Calu3 (cell line): ENCODE measurements at regions of chr18 and their contacts with region 1.

Region 1: GRCh38 chr18:3151399-3152264 is 68.1 kb downstream of the MYOM1 start:
- DNase-seq: no peak
- H3K4me3 Mint-ChIP-seq: no peak overlapping the region
- H3K27ac Mint-ChIP-seq: peak overlapping the region; percentile 52
- H3K4me1 Mint-ChIP-seq: peaks cover 46% of the 10 kb centered on the region
- H3K27me3 Mint-ChIP-seq: no peaks in the 10 kb centered on the region
- CTCF ChIP-seq: peak; percentile 51

Region 2: DNA sequence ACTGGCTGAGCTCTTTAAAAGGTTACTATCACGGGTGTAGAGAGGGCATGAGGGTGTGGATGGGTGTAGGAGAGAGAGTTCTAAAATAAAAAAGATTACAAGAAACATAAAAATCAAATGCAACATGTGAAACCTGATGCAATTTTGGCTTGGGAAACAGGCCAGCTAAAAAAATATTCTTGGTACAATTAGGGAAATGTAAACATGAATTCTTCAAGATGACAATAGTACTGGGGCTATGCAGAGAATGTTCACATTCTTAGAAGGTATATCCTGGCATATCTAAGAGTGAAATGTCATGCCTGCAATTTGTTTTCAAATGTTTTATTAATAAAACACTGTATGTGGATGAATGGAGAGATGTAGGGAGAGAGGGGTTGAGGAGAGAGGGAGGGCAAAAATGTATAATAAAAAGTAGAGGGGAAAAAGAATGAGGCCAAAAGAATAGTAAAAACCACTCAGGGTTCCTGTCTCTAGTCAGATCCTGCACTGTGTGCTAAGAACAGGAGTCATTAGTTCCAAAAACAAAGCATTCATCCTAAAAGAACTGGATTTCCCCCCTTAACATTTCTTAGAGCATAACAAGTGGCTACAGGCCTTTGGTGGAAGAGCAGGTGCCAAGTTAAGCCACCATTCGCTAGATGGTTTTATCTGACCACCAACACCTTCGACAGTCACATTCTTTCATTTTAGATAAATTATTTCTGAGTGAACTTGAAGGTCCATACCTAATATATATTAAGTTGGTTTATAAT is 216.0 kb before region 1 on chr18:
- CTCF ChIA-PET with region 1: no interaction called
- intact Hi-C with region 1: loop called (anchors 5 kb)
- DNase-seq: no peak
- H3K4me3 Mint-ChIP-seq: no peak overlapping the region
- H3K27ac Mint-ChIP-seq: no peak overlapping the region
- H3K4me1 Mint-ChIP-seq: peaks cover 17% of the 10 kb centered on the region
- H3K27me3 Mint-ChIP-seq: no peaks in the 10 kb centered on the region
- CTCF ChIP-seq: no peak

Region 3: DNA sequence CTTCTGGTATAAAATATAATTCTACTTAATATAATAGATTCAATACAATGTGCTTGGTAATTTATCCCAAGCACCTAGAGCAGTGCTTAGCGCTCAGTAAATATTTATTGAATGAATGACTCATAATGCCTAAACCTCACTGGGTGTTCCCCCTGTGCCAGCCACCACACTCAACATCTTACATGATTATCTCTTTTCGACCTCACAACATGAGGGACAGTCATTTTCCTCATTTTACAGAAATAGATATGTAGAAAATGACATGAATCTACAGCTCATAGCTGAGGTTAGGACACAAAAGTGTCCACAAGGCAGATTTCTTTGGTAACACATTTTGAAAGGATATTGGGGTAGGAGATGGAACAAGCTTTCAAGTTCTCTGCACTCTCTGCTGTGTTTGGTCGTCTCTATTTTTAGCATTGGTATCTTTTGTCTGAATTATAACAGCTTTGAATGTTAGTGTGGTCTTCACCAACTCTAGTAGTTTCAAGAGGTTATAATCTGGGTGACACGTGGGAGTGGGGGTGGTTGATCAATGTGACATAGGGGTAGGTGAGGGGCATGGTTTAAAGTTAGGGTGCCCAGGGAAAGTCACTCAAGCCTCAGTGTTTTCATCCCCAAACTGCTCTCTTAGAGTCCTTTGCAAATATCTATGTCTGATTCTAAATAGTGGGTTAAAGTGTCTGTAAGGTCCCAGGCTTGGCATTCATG is 58.4 kb after region 1 on chr18:
- CTCF ChIA-PET with region 1: interaction called, 3 read pairs
- intact Hi-C with region 1: loop called (anchors 5 kb)
- DNase-seq: no peak
- H3K4me3 Mint-ChIP-seq: peak overlapping the region; percentile 23
- H3K27ac Mint-ChIP-seq: peak overlapping the region; percentile 83
- H3K4me1 Mint-ChIP-seq: peaks cover 44% of the 10 kb centered on the region
- H3K27me3 Mint-ChIP-seq: no peaks in the 10 kb centered on the region
- CTCF ChIP-seq: no peak